SK-N-SH (cell line): ENCODE measurements at regions of chr1 and their contacts with region 1.

Region 1: GRCh38 chr1:4652631-4653327 is 1.6 kb upstream of the AJAP1 start:
- DNase-seq: peak; percentile 92
- H3K4me3 ChIP-seq: no peak overlapping the region
- H3K27ac ChIP-seq: no peak overlapping the region
- H3K4me1 ChIP-seq: peaks cover 0 to 9% of the 10 kb centered on the region in 2 experiments; a peak in 1 of 4 replicates
- H3K27me3 ChIP-seq: no peaks in the 10 kb centered on the region
- CTCF ChIP-seq: peak; percentile 67
- EP300 ChIP-seq: no peak
- RAD21 ChIP-seq: peak; percentile 59

Region 2: DNA sequence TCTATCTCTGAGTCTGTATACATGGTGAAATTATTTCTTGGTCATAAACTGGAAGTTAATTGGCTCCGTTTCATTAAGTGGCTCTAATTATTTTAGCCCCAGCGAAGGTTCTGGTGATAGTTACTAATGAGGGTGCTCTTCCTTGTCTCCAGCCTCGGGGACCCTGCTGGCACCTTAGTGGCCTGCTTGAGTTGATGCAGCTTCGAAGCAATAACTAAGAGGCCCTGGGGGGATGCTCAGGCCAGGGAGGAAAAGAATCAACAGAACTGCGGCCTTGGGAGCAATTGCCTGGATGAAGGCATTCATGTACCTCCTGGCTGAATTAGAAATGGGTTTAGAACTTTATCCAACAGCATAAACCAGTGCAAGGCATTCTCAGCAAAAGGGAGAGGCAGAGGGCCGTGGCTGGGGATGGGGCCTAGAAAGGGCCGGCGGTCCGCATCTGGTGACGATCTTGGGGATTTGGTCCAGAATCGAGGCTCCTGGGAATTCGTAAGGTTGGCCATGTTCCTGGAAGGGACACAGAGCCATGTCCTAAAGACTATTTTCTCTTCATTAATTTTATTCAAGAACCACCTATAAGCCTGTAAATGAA is 98.4 kb before region 1 on chr1:
- CTCF ChIA-PET with region 1: no interaction called
- POLR2A ChIA-PET with region 1: no interaction called
- DNase-seq: no peak
- H3K4me3 ChIP-seq: no peak overlapping the region
- H3K27ac ChIP-seq: no peak overlapping the region
- H3K4me1 ChIP-seq: no peaks in the 10 kb centered on the region
- H3K27me3 ChIP-seq: no peaks in the 10 kb centered on the region
- CTCF ChIP-seq: no peak
- EP300 ChIP-seq: no peak
- RAD21 ChIP-seq: no peak

Region 3: GRCh38 chr1:4664606-4665005 is 11.8 kb after region 1 on chr1:
- CTCF ChIA-PET with region 1: interaction called, 21 read pairs
- POLR2A ChIA-PET with region 1: no interaction called
- DNase-seq: no peak
- H3K4me3 ChIP-seq: no peak overlapping the region
- H3K27ac ChIP-seq: no peak overlapping the region
- H3K4me1 ChIP-seq: peaks cover 0 to 2% of the 10 kb centered on the region in 2 experiments; a peak in 1 of 4 replicates
- H3K27me3 ChIP-seq: no peaks in the 10 kb centered on the region
- CTCF ChIP-seq: no peak
- EP300 ChIP-seq: no peak
- RAD21 ChIP-seq: no peak

Region 4: DNA sequence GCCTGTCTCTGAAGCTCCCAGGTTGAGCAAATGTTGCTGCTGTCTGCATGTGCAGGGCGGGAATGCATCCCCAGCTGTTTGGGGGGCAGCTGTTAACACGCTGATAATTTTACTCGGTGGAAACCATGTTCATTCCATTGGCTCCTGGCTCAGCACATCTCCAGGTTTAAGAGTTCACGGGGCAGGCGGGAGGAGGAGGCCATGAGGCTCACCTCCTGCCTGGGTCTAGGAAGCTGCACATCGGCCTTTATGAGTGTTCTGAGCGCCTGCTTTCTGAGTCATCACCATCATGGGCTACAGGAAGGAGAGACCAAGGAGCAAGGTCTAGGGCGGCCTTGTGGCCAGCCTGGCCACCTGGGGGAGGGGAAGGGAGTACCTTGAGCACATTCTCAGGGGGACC is 31.4 kb after region 1 on chr1:
- CTCF ChIA-PET with region 1: interaction called, 15 read pairs
- POLR2A ChIA-PET with region 1: no interaction called
- DNase-seq: no peak
- H3K4me3 ChIP-seq: no peak overlapping the region
- H3K27ac ChIP-seq: no peak overlapping the region
- H3K4me1 ChIP-seq: peaks cover 0 to 5% of the 10 kb centered on the region in 2 experiments; a peak in 1 of 4 replicates
- H3K27me3 ChIP-seq: no peaks in the 10 kb centered on the region
- CTCF ChIP-seq: no peak
- EP300 ChIP-seq: no peak
- RAD21 ChIP-seq: no peak

Region 5: DNA sequence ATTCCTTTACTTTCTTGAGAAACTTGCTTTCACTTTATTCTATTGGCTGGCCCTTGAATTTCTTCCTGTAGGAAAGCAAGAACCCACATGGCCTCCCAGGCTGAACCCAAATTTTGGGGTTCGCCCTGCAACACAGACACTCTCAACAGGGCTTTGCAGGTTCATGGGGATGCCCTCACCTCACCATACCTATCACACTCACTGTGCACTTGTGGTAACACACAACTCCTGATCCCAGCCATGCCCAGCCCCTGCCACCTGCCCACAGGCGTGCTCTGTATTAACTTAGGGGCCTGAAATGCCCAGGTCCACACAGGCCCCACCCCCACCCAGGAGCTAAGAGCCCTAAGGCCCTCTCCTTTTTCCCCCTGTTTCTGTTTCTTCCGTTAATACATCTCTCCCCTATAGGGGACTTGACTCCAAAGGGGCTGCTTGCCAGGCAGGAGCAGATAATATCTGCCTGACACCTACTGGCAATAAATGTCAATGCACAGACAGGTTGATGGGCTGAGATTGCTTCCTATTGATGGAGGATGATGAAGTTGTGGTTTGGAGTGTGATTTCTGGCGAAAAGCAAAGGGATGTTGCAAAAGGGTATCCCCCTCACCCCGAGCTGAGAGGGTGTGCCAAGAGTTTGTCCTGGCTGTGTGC is 173.1 kb after region 1 on chr1:
- CTCF ChIA-PET with region 1: interaction called, 52 read pairs
- POLR2A ChIA-PET with region 1: no interaction called
- DNase-seq: peak; percentile 58
- H3K4me3 ChIP-seq: no peak overlapping the region
- H3K27ac ChIP-seq: no peak overlapping the region
- H3K4me1 ChIP-seq: no peaks in the 10 kb centered on the region; a peak in 1 of 4 replicates
- H3K27me3 ChIP-seq: no peaks in the 10 kb centered on the region
- CTCF ChIP-seq: no peak
- EP300 ChIP-seq: no peak
- RAD21 ChIP-seq: peak; percentile 73

Region 6: GRCh38 chr1:5620990-5621389 is 968.2 kb after region 1 on chr1:
- CTCF ChIA-PET with region 1: interaction called, 18 read pairs
- POLR2A ChIA-PET with region 1: no interaction called
- DNase-seq: peak; percentile 83
- H3K4me3 ChIP-seq: no peak overlapping the region
- H3K27ac ChIP-seq: no peak overlapping the region
- H3K4me1 ChIP-seq: peaks cover 0 to 8% of the 10 kb centered on the region in 2 experiments; a peak in 1 of 4 replicates
- H3K27me3 ChIP-seq: no peaks in the 10 kb centered on the region
- CTCF ChIP-seq: no peak
- EP300 ChIP-seq: no peak
- RAD21 ChIP-seq: peak; percentile 80

Region 7: GRCh38 chr1:5975133-5975880 is 1322.5 kb after region 1 on chr1:
- CTCF ChIA-PET with region 1: interaction called, 18 read pairs
- POLR2A ChIA-PET with region 1: no interaction called
- DNase-seq: peak; percentile 84
- H3K4me3 ChIP-seq: peak overlapping the region in 1 of 2 experiments; percentile 39; a peak in 1 of 4 replicates
- H3K27ac ChIP-seq: no peak overlapping the region
- H3K4me1 ChIP-seq: peaks cover 0 to 21% of the 10 kb centered on the region in 2 experiments; a peak in 1 of 4 replicates
- H3K27me3 ChIP-seq: no peaks in the 10 kb centered on the region
- CTCF ChIP-seq: peak; percentile 71
- EP300 ChIP-seq: no peak
- RAD21 ChIP-seq: peak; percentile 96